T-cell (primary cell): ENCODE measurements at regions of chr19 and their contacts with region 1.

Region 1: DNA sequence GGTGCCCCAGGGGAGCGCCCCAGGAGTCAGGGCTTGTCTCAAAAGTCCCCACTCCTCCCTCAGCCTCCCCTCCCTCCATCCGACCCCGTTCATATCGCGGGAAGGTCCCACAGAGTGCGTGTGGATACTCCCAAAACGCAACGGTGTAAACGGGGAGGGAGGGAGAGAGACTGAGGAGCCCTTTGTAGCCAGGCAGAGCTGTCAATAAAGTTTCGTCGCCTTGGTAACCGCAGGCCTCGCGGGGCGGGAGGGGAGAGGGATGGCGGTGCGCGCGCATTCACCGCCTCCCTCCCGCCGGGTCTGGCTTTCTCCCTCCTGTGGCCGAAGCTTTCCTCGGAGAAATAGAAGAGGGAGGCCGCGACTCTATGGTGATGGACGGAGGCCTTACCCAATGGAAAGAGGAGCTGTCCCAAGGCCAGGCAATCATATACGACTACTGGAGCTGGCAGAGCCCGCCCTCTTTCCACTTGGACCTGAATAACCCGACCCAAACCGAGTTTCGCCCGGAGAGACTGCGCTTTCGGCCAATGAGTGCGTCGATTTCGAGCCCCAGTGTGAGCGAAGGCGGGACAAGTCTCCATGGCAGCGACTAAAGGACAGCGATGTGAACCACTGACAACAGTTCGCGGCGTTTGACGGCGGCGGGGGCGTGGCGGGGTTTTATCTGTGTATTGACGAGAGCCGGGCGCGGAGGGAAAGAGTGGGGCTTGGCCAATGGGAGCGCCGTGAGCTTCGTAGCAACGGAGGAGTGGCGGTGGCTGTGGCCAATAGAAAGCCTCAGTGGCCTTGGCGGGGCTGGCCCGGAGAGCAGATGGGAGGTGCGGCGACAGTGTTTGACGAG is at the start of gene KMT5C:
- DNase-seq: peak; percentile 100
- ATAC-seq: peak; percentile 78 to 84 (median 82)
- H3K4me3 ChIP-seq: peak within 1 kb of the TSS; percentile 64 to 72
- H3K4me3 Mint-ChIP-seq: peak within 1 kb of the TSS; percentile 78 to 92 (median 92)
- H3K27ac ChIP-seq: peak within 1 kb of the TSS; percentile 99
- H3K27ac Mint-ChIP-seq: peak within 1 kb of the TSS; percentile 88
- H3K4me1 ChIP-seq: peaks cover 6 to 31% of the 10 kb centered on the region in 2 experiments
- H3K4me1 Mint-ChIP-seq: peaks cover 19 to 25% (median 21%) of the 10 kb centered on the region in 3 donors
- H3K27me3 ChIP-seq: peaks cover 0 to 20% of the 10 kb centered on the region in 2 experiments
- H3K27me3 Mint-ChIP-seq: peaks cover 3 to 11% of the 10 kb centered on the region in 2 donors
- total RNA-seq, gene KMT5C: 24.4 to 71.8 (median 30.7) TPM

Region 2: GRCh38 chr19:55227241-55228014 is 111.8 kb before region 1 on chr19:
- CTCF ChIA-PET with region 1: no interaction called
- POLR2A ChIA-PET with region 1: no interaction called
- DNase-seq: no peak
- ATAC-seq: peak in 1 of 4 experiments; percentile 9
- H3K4me3 ChIP-seq: no peak overlapping the region
- H3K4me3 Mint-ChIP-seq: no peak overlapping the region
- H3K27ac ChIP-seq: no peak overlapping the region
- H3K27ac Mint-ChIP-seq: no peak overlapping the region
- H3K4me1 ChIP-seq: no peaks in the 10 kb centered on the region
- H3K4me1 Mint-ChIP-seq: peaks cover 0 to 3% (median 0%) of the 10 kb centered on the region in 3 donors
- H3K27me3 ChIP-seq: no peaks in the 10 kb centered on the region
- H3K27me3 Mint-ChIP-seq: no peaks in the 10 kb centered on the region

Region 3: GRCh38 chr19:55258828-55259539 is 80.3 kb before region 1 on chr19 and contains the start of gene PPP6R1:
- CTCF ChIA-PET with region 1: interaction called in 1 of 2 experiments, 4 read pairs
- POLR2A ChIA-PET with region 1: interaction called in 1 of 2 experiments, 11 read pairs
- DNase-seq: peak; percentile 84 to 98 (median 91)
- ATAC-seq: peak; percentile 81 to 83 (median 82)
- H3K4me3 ChIP-seq: peak within 1 kb of the TSS; percentile 79 to 86
- H3K4me3 Mint-ChIP-seq: peak within 1 kb of the TSS; percentile 96 to 100 (median 97)
- H3K27ac ChIP-seq: peak within 1 kb of the TSS; percentile 94
- H3K27ac Mint-ChIP-seq: peak within 1 kb of the TSS; percentile 99
- H3K4me1 ChIP-seq: peaks cover 23 to 49% of the 10 kb centered on the region in 2 experiments
- H3K4me1 Mint-ChIP-seq: peaks cover 38 to 48% (median 46%) of the 10 kb centered on the region in 3 donors
- H3K27me3 ChIP-seq: no peaks in the 10 kb centered on the region
- H3K27me3 Mint-ChIP-seq: no peaks in the 10 kb centered on the region
- total RNA-seq, gene PPP6R1: 173 to 208 (median 194) TPM

Region 4: GRCh38 chr19:55301459-55302317 is 37.6 kb before region 1 on chr19:
- CTCF ChIA-PET with region 1: interaction called, 7 to 15 read pairs
- POLR2A ChIA-PET with region 1: interaction called in 1 of 2 experiments, 6 read pairs
- DNase-seq: peak; percentile 74 to 97 (median 90)
- ATAC-seq: peak; percentile 87 to 91 (median 89)
- H3K4me3 ChIP-seq: peak overlapping the region; percentile 50 to 67
- H3K4me3 Mint-ChIP-seq: peak overlapping the region; percentile 78 to 83 (median 81)
- H3K27ac ChIP-seq: peak overlapping the region; percentile 53
- H3K27ac Mint-ChIP-seq: peak overlapping the region; percentile 70 to 86
- H3K4me1 ChIP-seq: peaks cover 0 to 17% of the 10 kb centered on the region in 2 experiments
- H3K4me1 Mint-ChIP-seq: peaks cover 11 to 13% (median 11%) of the 10 kb centered on the region in 3 donors
- H3K27me3 ChIP-seq: peaks cover 0 to 17% of the 10 kb centered on the region in 2 experiments
- H3K27me3 Mint-ChIP-seq: no peaks in the 10 kb centered on the region

Region 5: GRCh38 chr19:55353803-55354697 is 14.8 kb after region 1 on chr19:
- CTCF ChIA-PET with region 1: no interaction called
- POLR2A ChIA-PET with region 1: interaction called, 3 to 11 read pairs
- DNase-seq: peak in 34 of 35 experiments; percentile 13 to 79 (median 44)
- ATAC-seq: peak; percentile 76 to 82 (median 81)
- H3K4me3 ChIP-seq: peak overlapping the region; percentile 45 to 70
- H3K4me3 Mint-ChIP-seq: peak overlapping the region; percentile 61 to 78 (median 73)
- H3K27ac ChIP-seq: no peak overlapping the region
- H3K27ac Mint-ChIP-seq: no peak overlapping the region
- H3K4me1 ChIP-seq: peaks cover 0 to 33% of the 10 kb centered on the region in 2 experiments
- H3K4me1 Mint-ChIP-seq: peaks cover 19 to 33% (median 20%) of the 10 kb centered on the region in 3 donors
- H3K27me3 ChIP-seq: peaks cover 2 to 77% of the 10 kb centered on the region in 2 experiments
- H3K27me3 Mint-ChIP-seq: peaks cover 31 to 47% of the 10 kb centered on the region in 2 donors

Region 6: DNA sequence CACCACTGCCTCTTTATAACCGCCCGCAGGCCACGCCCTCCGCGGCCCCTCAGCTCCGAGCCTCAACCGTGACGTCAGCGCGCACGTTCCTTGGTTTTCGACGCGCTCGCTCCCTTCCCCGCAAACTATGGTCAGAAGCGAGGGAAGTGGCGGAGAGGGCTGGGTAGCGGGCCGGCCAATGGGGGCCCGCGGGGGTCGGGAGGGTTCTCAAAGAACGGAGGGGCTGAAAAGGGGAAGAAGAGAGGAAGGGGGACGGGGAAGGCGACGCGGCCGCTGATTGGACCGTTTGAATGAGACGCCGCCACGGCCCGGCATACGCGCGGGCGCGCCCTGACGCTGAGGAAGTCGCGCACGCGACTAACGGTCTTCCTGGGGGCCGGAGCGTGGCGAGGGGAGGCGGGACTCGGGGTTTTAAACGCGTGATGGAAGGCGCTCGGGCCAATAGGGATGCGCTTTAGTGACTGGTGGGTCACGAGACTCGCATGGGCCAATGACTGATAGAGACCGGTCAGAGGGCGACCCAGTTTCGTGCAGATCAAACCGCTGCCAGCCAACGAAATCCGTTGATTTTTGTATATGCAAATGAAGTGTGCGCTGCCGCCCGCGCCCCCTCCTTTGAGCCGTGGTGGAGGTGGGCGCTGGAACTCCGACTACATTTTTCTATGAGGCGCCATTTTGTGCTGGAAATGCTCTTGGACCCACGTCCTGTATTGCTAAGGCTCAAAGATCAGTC is 68.7 kb after region 1 on chr19:
- CTCF ChIA-PET with region 1: no interaction called
- POLR2A ChIA-PET with region 1: interaction called, 3 to 11 read pairs
- DNase-seq: peak; percentile 91 to 99 (median 97)
- ATAC-seq: peak; percentile 89 to 92 (median 90)
- H3K4me3 ChIP-seq: peak overlapping the region; percentile 54 to 79
- H3K4me3 Mint-ChIP-seq: peak overlapping the region; percentile 87 to 93 (median 93)
- H3K27ac ChIP-seq: peak overlapping the region; percentile 100
- H3K27ac Mint-ChIP-seq: peak overlapping the region; percentile 96 to 98
- H3K4me1 ChIP-seq: peaks cover 6 to 32% of the 10 kb centered on the region in 2 experiments
- H3K4me1 Mint-ChIP-seq: peaks cover 24 to 32% (median 29%) of the 10 kb centered on the region in 3 donors
- H3K27me3 ChIP-seq: no peaks in the 10 kb centered on the region
- H3K27me3 Mint-ChIP-seq: no peaks in the 10 kb centered on the region